Transverse colon (tissue), 4 donors: ENCODE measurements at regions of chr20 and their contacts with region 1.

Region 1: DNA sequence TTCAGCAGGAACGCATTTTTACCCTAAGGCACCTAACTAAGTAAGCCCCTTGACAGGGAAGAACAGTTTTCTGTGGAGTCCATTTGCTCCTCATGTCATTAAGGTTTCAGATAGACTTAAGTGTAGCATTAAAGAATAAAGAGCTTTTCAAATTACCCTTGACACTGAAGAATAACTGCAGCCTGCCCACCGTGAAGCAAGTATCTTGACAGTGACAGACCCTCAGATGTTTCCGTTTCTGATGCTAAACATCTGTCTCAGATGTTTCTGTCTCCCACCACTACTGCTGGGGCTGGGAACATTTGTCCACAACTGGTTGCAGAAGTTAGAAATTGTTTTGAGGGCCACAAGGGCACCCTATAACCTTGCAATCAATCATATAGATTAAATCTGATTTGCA is 50.0 kb downstream of the SNAP25 start:
- DNase-seq: no peak
- H3K4me3 ChIP-seq: no peak overlapping the region
- H3K27ac ChIP-seq: no peak overlapping the region
- H3K4me1 ChIP-seq: no peaks in the 10 kb centered on the region
- H3K27me3 ChIP-seq: no peaks in the 10 kb centered on the region
- CTCF ChIP-seq: no peak
- EP300 ChIP-seq: no peak
- POLR2A ChIP-seq: no peak

Region 2: DNA sequence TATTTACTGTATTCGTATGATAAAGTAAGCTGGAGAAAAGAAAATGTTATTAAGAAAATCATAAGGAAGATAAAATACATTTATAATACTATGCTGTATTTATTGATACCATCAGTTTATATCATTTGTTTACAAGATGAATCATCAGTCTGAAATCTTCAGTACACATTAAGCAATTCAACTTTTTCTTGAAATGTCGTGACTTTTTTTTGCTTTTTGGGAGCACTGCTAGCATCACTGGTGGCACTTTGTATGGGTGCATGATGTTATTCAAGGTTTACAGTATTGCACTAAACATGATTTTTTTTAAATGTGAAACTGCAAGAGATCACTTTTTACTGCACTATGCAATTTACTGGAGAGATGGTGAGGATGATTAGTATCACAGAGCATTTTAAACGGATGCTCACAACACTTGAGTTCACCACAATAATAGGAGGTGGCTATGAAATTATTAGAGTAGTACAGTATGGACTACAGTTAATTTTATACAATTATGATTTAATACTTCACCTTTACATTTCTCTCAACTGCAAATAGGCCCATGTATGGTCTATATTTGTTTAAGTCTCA is 35.9 kb after region 1 on chr20:
- in situ Hi-C with region 1: no loop called
- intact Hi-C with region 1: no loop called
- DNase-seq: no peak
- H3K4me3 ChIP-seq: no peak overlapping the region
- H3K27ac ChIP-seq: no peak overlapping the region
- H3K4me1 ChIP-seq: no peaks in the 10 kb centered on the region
- H3K27me3 ChIP-seq: no peaks in the 10 kb centered on the region
- CTCF ChIP-seq: no peak
- EP300 ChIP-seq: no peak
- POLR2A ChIP-seq: no peak

Region 3: DNA sequence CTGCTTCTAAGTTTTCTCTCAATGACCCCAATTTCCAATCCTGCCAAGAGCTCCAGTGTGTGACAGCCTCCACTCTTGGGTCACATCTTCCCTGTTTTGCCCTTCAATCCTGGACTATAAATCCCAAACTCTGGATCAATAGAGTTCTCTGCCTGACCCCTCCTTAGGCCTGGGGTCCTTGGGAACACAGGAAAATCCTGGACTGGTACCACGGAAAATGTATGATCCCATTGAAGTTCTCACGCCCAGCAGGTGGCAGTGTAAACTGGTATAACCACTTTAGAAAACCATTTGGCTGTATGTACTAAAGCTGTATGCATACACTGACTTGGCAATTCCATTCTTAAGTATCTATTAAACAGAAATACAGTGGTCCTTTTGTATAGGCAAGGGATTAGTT is 47.9 kb after region 1 on chr20:
- in situ Hi-C with region 1: no loop called
- intact Hi-C with region 1: loop called (anchors 1 kb)
- DNase-seq: no peak
- H3K4me3 ChIP-seq: no peak overlapping the region
- H3K27ac ChIP-seq: no peak overlapping the region
- H3K4me1 ChIP-seq: no peaks in the 10 kb centered on the region
- H3K27me3 ChIP-seq: peaks cover 1% of the 10 kb centered on the region
- CTCF ChIP-seq: no peak
- EP300 ChIP-seq: no peak
- POLR2A ChIP-seq: no peak